ENCODE measurements at regions of chr18 and their contacts with region 1.

Region 1: DNA sequence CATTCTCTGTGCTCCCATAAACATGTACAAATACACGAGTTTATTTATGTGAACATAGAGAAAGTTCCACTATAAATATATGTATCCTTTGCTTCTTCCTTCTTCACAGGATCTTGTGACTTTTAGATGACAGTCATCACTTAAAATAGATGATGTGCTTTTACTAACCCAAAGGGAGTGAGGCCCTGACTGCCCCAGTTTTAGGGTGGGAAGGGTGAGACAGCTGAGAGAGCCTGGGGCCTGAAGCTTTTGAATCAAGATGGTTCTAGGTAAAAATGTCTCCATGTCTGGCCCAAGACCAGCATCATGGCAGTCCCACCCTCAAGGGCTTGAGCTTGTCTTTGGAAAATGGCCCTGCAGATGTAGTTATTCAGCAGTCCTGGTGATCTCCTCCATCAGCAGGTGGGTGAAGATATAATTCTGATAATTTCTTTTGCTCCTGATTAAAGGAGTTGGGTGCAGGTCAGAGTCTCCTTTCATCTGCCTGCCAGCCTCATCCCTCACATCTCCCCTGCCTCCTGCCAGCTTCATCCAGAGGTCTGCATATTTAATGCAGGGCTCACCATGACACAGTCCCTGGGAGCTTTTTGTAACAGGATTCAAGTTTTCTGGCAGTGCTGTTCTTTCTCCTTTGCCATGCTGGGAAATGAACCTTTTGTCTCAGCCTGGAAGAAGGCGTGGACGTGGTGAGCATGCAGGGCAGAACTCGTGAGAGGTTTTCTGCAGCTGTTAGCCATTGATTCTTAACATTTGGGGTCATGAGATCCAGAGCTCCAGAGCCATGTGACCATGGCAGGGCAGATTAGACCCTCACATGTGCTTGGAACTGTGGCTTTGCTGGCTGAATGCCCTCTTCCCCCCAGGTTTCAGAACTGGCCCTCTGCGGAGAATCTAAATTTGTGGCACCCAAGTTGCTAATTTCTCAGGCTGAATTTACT is 2.7 kb downstream of the HRH4 start:
- DNase-seq: no peak
- ATAC-seq: no peak
- H3K4me3 ChIP-seq: no peak overlapping the region
- H3K27ac ChIP-seq: no peak overlapping the region
- H3K4me1 ChIP-seq: no peaks in the 10 kb centered on the region
- H3K27me3 ChIP-seq: no peaks in the 10 kb centered on the region
- CTCF ChIP-seq: no peak

Region 2: GRCh38 chr18:24368749-24369148 is 94.4 kb before region 1 on chr18:
- CTCF ChIA-PET with region 1: no interaction called
- POLR2A ChIA-PET with region 1: no interaction called
- in situ Hi-C with region 1: no loop called
- intact Hi-C with region 1: loop called (anchors 10 kb)
- DNase-seq: no peak
- ATAC-seq: no peak
- H3K4me3 ChIP-seq: no peak overlapping the region
- H3K27ac ChIP-seq: no peak overlapping the region
- H3K4me1 ChIP-seq: no peaks in the 10 kb centered on the region
- H3K27me3 ChIP-seq: no peaks in the 10 kb centered on the region
- CTCF ChIP-seq: no peak

Region 3: GRCh38 chr18:24403076-24403475 is 60.0 kb before region 1 on chr18:
- CTCF ChIA-PET with region 1: interaction called, 10 read pairs
- POLR2A ChIA-PET with region 1: no interaction called
- in situ Hi-C with region 1: no loop called
- intact Hi-C with region 1: no loop called
- DNase-seq: no peak
- ATAC-seq: no peak
- H3K4me3 ChIP-seq: no peak overlapping the region
- H3K27ac ChIP-seq: no peak overlapping the region
- H3K4me1 ChIP-seq: peaks cover 5% of the 10 kb centered on the region; the same call in 1 of the 2 replicates
- H3K27me3 ChIP-seq: no peaks in the 10 kb centered on the region
- CTCF ChIP-seq: no peak